ENCODE measurements at regions of chr9 and their contacts with region 1.

Region 1: DNA sequence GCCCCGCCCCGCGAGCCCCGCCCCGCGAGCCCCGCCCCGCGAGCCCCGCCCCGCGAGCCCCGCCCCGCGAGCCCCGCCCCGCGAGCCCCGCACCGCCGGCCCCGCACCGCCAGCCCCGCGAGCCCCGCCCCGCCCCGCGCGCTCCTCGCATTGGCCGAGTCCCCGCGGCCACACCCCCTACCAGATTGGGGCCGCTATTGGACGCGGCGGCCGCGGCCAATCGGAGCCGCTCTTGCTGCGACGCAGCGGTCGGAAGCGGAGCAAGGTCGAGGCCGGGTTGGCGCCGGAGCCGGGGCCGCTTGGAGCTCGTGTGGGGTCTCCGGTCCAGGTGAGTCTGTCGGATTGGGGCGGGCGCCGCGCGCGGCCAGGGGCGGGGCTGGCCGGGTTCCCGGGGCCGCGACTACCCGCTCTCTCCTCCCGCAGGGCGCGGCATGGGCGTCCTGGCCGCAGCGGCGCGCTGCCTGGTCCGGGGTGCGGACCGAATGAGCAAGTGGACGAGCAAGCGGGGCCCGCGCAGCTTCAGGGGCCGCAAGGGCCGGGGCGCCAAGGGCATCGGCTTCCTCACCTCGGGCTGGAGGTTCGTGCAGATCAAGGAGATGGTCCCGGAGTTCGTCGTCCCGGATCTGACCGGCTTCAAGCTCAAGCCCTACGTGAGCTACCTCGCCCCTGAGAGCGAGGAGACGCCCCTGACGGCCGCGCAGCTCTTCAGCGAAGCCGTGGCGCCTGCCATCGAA is at the start of gene MRPL41:
- DNase-seq: peak; percentile 79 to 95 (median 86)
- ATAC-seq: peak; percentile 84
- H3K4me3 ChIP-seq: peak within 1 kb of the TSS; percentile 59 to 76
- H3K4me3 Mint-ChIP-seq: peak within 1 kb of the TSS; percentile 79
- H3K27ac ChIP-seq: peak within 1 kb of the TSS; percentile 64 to 70
- H3K27ac Mint-ChIP-seq: peak within 1 kb of the TSS; percentile 79
- H3K4me1 ChIP-seq: peaks cover 15% of the 10 kb centered on the region
- H3K4me1 Mint-ChIP-seq: peaks cover 15% of the 10 kb centered on the region
- H3K27me3 ChIP-seq: no peaks in the 10 kb centered on the region
- H3K27me3 Mint-ChIP-seq: no peaks in the 10 kb centered on the region
- CTCF ChIP-seq: no peak
- total RNA-seq, gene MRPL41: 31.8 to 33.5 TPM

Region 2: GRCh38 chr9:137302176-137302994 is 249.4 kb before region 1 on chr9 and contains the start of gene NRARP:
- CTCF ChIA-PET with region 1: no interaction called
- POLR2A ChIA-PET with region 1: no interaction called
- intact Hi-C with region 1: loop called in 1 of 2 experiments (anchors 1 kb)
- DNase-seq: peak; percentile 74 to 95 (median 90)
- ATAC-seq: peak; percentile 94
- H3K4me3 ChIP-seq: peak within 1 kb of the TSS; percentile 39 to 50
- H3K4me3 Mint-ChIP-seq: peak within 1 kb of the TSS; percentile 60
- H3K27ac ChIP-seq: no peak within 1 kb of the TSS
- H3K27ac Mint-ChIP-seq: no peak within 1 kb of the TSS
- H3K4me1 ChIP-seq: peaks cover 48% of the 10 kb centered on the region
- H3K4me1 Mint-ChIP-seq: peaks cover 16% of the 10 kb centered on the region
- H3K27me3 ChIP-seq: peaks cover 20 to 21% of the 10 kb centered on the region in 2 experiments
- H3K27me3 Mint-ChIP-seq: peaks cover 14% of the 10 kb centered on the region
- CTCF ChIP-seq: peak; percentile 42
- total RNA-seq, gene NRARP: 1.00 to 1.5 TPM

Region 3: DNA sequence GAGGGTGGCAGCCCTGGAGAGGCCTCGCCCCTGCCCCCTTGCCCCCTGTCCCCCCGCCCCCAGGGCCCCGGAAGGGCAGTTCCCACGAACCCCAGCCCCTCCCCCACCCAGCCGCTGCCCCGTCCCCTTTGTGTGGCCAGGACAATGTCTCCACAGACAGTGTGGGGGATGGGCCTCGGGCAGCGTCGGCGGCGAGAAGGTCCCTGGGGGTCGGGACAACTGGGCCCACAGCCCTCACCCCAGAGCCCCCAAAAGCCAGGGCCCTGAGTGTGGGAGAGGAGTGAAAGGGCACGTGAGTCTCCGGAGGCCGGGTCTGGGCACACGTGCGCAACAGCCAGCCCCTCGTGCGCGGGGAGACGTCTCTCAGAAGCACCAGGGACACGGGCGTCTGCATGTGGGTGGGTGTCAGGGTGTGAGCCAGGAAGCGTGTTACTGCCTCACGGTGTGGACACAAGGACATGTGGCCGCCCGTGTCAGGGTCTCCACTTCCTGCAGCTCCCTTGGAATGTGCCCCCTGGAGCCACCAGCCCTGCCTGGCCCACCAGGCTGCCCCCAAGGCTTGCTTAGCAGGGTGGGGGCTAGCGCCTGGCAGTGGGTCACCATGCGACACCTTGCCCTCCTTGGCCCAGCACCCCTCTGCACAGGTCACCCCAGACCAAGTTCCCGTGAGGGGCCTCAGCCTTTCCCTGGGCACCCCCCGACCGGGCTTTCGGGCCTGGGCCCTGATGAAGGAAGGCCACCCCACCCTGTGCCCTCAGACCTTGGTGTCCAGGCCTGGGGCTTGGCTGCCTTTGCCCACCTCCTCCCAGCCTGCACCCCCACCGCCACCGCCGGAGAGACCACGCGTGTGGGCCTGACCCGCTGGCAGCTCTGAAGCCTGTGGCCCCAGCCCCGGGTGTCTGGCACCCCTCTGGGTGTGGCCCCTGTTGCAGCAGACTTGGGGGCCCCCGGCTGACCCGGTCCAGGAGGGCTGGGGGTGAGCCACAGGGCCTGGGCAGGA is 237.0 kb before region 1 on chr9:
- CTCF ChIA-PET with region 1: no interaction called
- POLR2A ChIA-PET with region 1: no interaction called
- intact Hi-C with region 1: no loop called
- DNase-seq: peak in 2 of 9 experiments; percentile 7 to 14
- ATAC-seq: no peak
- H3K4me3 ChIP-seq: no peak overlapping the region
- H3K4me3 Mint-ChIP-seq: no peak overlapping the region
- H3K27ac ChIP-seq: no peak overlapping the region
- H3K27ac Mint-ChIP-seq: no peak overlapping the region
- H3K4me1 ChIP-seq: no peaks in the 10 kb centered on the region
- H3K4me1 Mint-ChIP-seq: no peaks in the 10 kb centered on the region
- H3K27me3 ChIP-seq: peaks cover 4 to 15% of the 10 kb centered on the region in 2 experiments
- H3K27me3 Mint-ChIP-seq: no peaks in the 10 kb centered on the region
- CTCF ChIP-seq: no peak

Region 4: GRCh38 chr9:137453643-137454081 is 98.2 kb before region 1 on chr9:
- CTCF ChIA-PET with region 1: no interaction called
- POLR2A ChIA-PET with region 1: no interaction called
- intact Hi-C with region 1: loop called in 1 of 2 experiments (anchors 2 kb)
- DNase-seq: peak in 7 of 9 experiments; percentile 1 to 67 (median 56)
- ATAC-seq: peak; percentile 63
- H3K4me3 ChIP-seq: no peak overlapping the region
- H3K4me3 Mint-ChIP-seq: no peak overlapping the region
- H3K27ac ChIP-seq: no peak overlapping the region
- H3K27ac Mint-ChIP-seq: peak overlapping the region; percentile 18
- H3K4me1 ChIP-seq: peaks cover 57% of the 10 kb centered on the region
- H3K4me1 Mint-ChIP-seq: peaks cover 37% of the 10 kb centered on the region
- H3K27me3 ChIP-seq: no peaks in the 10 kb centered on the region
- H3K27me3 Mint-ChIP-seq: no peaks in the 10 kb centered on the region
- CTCF ChIP-seq: no peak

Region 5: DNA sequence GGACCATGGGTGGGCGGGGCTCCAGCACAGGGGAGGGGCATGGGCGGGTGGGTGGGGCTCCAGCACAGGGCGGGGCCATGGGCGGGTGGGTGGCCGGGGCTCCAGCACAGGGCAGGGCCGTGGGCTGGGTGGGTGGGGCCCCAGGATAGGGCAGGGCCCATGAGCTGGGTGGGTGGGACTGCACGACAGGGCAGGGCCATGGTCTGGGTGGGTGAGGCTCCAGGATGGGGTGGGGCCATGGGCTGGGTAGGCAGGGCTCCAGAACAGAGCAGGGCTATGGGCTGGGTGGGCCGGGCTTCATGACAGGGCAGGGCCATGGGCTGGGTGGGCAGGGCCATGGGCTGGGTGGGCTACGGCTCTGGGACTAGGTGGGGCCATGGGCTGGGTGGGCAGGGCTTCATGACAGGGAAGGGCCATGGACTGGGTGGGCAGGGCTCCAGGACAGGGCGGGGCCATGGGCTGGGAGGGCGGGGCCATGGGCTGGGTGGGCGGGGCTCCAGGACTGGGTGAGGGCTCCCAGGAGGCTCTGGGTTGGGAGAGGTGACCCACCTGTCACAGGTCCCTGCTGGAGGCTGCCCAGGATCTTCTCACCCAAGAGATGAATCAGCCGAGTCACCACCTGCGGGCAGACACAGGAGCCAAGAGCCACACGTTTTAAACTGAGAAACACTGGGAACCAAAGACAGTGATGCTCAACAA is 59.2 kb before region 1 on chr9:
- CTCF ChIA-PET with region 1: no interaction called
- POLR2A ChIA-PET with region 1: no interaction called
- intact Hi-C with region 1: no loop called
- DNase-seq: peak in 2 of 9 experiments; percentile 38 to 49
- ATAC-seq: peak; percentile 85
- H3K4me3 ChIP-seq: no peak overlapping the region
- H3K4me3 Mint-ChIP-seq: no peak overlapping the region
- H3K27ac ChIP-seq: no peak overlapping the region
- H3K27ac Mint-ChIP-seq: no peak overlapping the region
- H3K4me1 ChIP-seq: no peaks in the 10 kb centered on the region
- H3K4me1 Mint-ChIP-seq: peaks cover 4% of the 10 kb centered on the region
- H3K27me3 ChIP-seq: no peaks in the 10 kb centered on the region
- H3K27me3 Mint-ChIP-seq: no peaks in the 10 kb centered on the region
- CTCF ChIP-seq: no peak

Region 6: GRCh38 chr9:137534256-137535117 is 17.3 kb before region 1 on chr9:
- CTCF ChIA-PET with region 1: interaction called, 6 read pairs
- POLR2A ChIA-PET with region 1: interaction called, 4 read pairs
- intact Hi-C with region 1: loop called in 1 of 2 experiments (anchors 2 kb)
- DNase-seq: peak in 2 of 9 experiments; percentile 38 to 54
- ATAC-seq: peak; percentile 49
- H3K4me3 ChIP-seq: no peak overlapping the region
- H3K4me3 Mint-ChIP-seq: no peak overlapping the region
- H3K27ac ChIP-seq: no peak overlapping the region
- H3K27ac Mint-ChIP-seq: no peak overlapping the region
- H3K4me1 ChIP-seq: peaks cover 16% of the 10 kb centered on the region
- H3K4me1 Mint-ChIP-seq: peaks cover 27% of the 10 kb centered on the region
- H3K27me3 ChIP-seq: no peaks in the 10 kb centered on the region
- H3K27me3 Mint-ChIP-seq: no peaks in the 10 kb centered on the region
- CTCF ChIP-seq: peak; percentile 36

Region 7: DNA sequence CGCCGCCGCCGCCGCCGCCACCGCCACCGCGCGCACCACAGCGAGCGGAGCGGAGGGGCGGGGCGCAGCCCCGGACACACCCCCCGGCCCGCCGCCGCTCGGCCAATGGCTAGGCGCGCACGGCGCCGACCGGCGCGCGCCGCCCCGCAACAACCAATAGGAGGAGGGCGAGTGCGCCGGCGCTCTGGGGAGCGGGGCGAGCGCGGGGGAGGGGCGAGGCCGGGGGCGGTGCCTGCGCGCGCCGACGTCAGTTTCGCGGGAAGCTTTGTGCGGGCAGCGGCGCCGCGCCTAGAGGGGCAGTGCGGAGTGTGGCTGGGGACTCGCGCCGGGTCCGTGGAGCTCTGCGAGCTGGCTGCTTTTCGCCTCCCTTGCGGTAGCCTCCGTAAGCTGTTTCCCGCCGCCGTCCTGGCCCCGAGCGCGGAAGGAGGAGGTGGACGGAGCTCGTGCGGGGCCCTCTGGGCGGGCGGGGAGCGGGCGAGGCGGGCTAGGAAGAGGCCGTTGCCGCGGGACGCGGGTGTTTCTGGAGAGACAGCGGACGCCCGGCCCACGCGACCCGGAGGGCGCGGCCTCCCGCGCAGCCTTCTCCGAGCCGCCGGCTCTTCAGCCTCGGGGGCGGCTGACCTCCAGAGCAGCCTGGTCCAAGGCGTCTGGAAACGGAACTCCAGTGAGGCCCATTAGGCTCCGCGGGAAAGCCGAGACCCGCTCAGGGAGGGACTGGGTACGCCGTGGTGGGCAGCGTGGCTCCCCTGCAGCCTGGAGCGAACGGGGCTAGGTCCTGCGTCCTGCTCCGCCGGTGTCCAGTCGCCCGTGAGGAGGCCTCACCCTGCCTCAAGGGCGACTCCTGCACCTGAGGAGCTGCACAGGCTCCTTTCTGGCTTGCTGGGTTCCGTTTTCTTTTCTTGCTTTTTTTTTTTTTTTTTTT is 38.9 kb after region 1 on chr9 and contains the start of gene ZMYND19:
- CTCF ChIA-PET with region 1: interaction called, 3 read pairs
- POLR2A ChIA-PET with region 1: no interaction called
- intact Hi-C with region 1: loop called (anchors 1 kb)
- DNase-seq: peak; percentile 78 to 95 (median 90)
- ATAC-seq: peak; percentile 98
- H3K4me3 ChIP-seq: peak within 1 kb of the TSS; percentile 61 to 63
- H3K4me3 Mint-ChIP-seq: peak within 1 kb of the TSS; percentile 93
- H3K27ac ChIP-seq: peak within 1 kb of the TSS in 1 of 2 experiments; percentile 56
- H3K27ac Mint-ChIP-seq: peak within 1 kb of the TSS; percentile 90
- H3K4me1 ChIP-seq: peaks cover 15% of the 10 kb centered on the region
- H3K4me1 Mint-ChIP-seq: peaks cover 12% of the 10 kb centered on the region
- H3K27me3 ChIP-seq: no peaks in the 10 kb centered on the region
- H3K27me3 Mint-ChIP-seq: no peaks in the 10 kb centered on the region
- CTCF ChIP-seq: no peak
- total RNA-seq, gene ZMYND19: 9.0 to 10.3 TPM

Region 8: GRCh38 chr9:137618105-137619067 is 66.6 kb after region 1 on chr9 and contains the start of gene EHMT1:
- CTCF ChIA-PET with region 1: no interaction called
- POLR2A ChIA-PET with region 1: no interaction called
- intact Hi-C with region 1: loop called in 1 of 2 experiments (anchors 2 kb)
- DNase-seq: peak; percentile 82 to 97 (median 89)
- ATAC-seq: peak; percentile 85
- H3K4me3 ChIP-seq: peak within 1 kb of the TSS; percentile 94 to 97
- H3K4me3 Mint-ChIP-seq: peak within 1 kb of the TSS; percentile 92
- H3K27ac ChIP-seq: peak within 1 kb of the TSS; percentile 82 to 97
- H3K27ac Mint-ChIP-seq: peak within 1 kb of the TSS; percentile 94
- H3K4me1 ChIP-seq: peaks cover 30% of the 10 kb centered on the region
- H3K4me1 Mint-ChIP-seq: peaks cover 42% of the 10 kb centered on the region
- H3K27me3 ChIP-seq: no peaks in the 10 kb centered on the region
- H3K27me3 Mint-ChIP-seq: no peaks in the 10 kb centered on the region
- CTCF ChIP-seq: no peak
- total RNA-seq, gene EHMT1: 83.1 to 86.2 TPM